ENCODE measurements at regions of chr9 and their contacts with region 1.

Region 1: DNA sequence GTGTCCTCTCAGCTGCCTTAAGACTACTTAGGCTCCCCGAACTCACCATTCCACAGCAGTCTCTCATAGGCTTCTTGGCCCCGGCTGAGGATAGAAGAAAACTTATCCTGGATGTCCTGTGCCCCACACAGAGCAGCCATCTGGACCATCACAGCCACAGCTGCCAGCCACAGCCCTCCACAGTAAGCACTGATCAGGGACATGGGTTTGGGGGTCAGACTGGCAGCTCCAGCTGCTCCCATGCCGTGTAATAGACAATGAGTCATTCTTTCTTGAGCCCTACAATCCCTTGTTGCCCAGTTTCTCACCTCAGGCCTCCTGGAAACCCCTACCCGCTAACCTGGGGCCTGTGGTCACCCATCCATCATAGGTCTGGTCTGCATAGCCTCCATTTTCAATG is 5.7 kb downstream of the CREB3 start:
- DNase-seq: no peak
- ATAC-seq: no peak
- H3K4me3 Mint-ChIP-seq: no peak overlapping the region
- H3K27ac Mint-ChIP-seq: no peak overlapping the region
- H3K4me1 Mint-ChIP-seq: peaks cover 20% of the 10 kb centered on the region
- H3K27me3 Mint-ChIP-seq: no peaks in the 10 kb centered on the region

Region 2: GRCh38 chr9:35748858-35749514 is 10.8 kb after region 1 on chr9 and contains the starts of genes GBA2 and RGP1:
- CTCF ChIA-PET with region 1: interaction called, 54 read pairs
- POLR2A ChIA-PET with region 1: interaction called, 4 read pairs
- intact Hi-C with region 1: no loop called
- DNase-seq: peak; percentile 83
- ATAC-seq: peak; percentile 79
- H3K4me3 Mint-ChIP-seq: peak within 1 kb of the TSS; percentile 93
- H3K27ac Mint-ChIP-seq: peak within 1 kb of the TSS; percentile 88
- H3K4me1 Mint-ChIP-seq: peaks cover 40% of the 10 kb centered on the region
- H3K27me3 Mint-ChIP-seq: no peaks in the 10 kb centered on the region
- total RNA-seq, gene GBA2: 19.6 to 23.7 TPM
- total RNA-seq, gene RGP1: 14.0 to 15.5 TPM

Measured in activated CD4-positive, alpha-beta T cell treated with anti-CD3 and anti-CD28 coated beads for 36 hours (primary cell).